Right lobe of liver (tissue), 6 donors: ENCODE measurements at regions of chr5 and their contacts with region 1.

Region 1: DNA sequence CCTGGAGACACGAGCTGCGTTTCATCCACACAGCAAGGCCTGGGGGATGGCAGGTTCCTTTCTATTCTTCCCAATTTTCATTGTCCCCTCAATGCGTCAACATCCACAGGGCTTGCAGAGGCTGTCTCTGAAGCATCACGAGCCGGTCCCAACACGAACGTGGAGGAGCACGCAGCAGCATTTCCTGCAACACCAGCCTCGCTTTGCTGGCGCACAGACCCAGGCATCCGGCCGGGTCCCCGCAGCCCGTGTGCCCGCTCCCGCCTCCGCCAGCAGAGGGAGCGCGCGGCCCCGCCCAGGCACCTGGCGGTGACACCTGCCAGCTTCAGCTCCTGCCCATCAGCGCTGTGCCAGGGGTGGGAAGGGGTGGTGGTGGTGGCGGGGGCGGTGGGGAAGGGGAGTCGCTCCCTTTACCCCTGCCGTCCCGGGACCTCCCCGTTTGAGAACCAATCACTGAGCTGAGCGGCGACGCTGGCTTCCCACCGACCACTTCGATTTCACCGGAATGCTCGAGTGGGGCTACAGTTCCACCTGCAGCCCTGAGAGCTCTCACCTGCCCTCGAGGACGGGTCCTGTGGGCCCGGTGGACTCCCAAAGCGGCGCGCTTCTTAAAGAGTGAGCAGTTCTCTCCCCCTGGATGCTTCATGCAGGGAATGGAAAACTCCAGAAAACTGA is 464.5 kb downstream of the ICE1 start:
- DNase-seq: peak; percentile 43 to 64 (median 63)
- ATAC-seq: peak; percentile 93 to 97 (median 96)
- H3K4me3 ChIP-seq: no peak overlapping the region
- H3K27ac ChIP-seq: no peak overlapping the region
- H3K4me1 ChIP-seq: no peaks in the 10 kb centered on the region
- H3K27me3 ChIP-seq: no peaks in the 10 kb centered on the region
- CTCF ChIP-seq: peak; percentile 50 to 77 (median 69)
- POLR2A ChIP-seq: no peak

Region 2: GRCh38 chr5:6545770-6546690 is 659.1 kb after region 1 on chr5:
- intact Hi-C with region 1: loop called in 1 of 2 experiments (anchors 10 kb)
- DNase-seq: no peak
- ATAC-seq: no peak
- H3K4me3 ChIP-seq: no peak overlapping the region
- H3K27ac ChIP-seq: no peak overlapping the region
- H3K4me1 ChIP-seq: no peaks in the 10 kb centered on the region
- H3K27me3 ChIP-seq: no peaks in the 10 kb centered on the region
- CTCF ChIP-seq: no peak
- POLR2A ChIP-seq: no peak